CD4-positive, alpha-beta memory T cell (primary cell): ENCODE measurements at regions of chr14 and their contacts with region 1.

Region 1: GRCh38 chr14:105300792-105301533 is at the start of gene BRF1:
- DNase-seq: peak; percentile 97 to 99 (median 98)
- H3K4me3 ChIP-seq: peak within 1 kb of the TSS; percentile 65 to 80
- H3K4me3 Mint-ChIP-seq: peak within 1 kb of the TSS; percentile 88 to 95 (median 90)
- H3K27ac ChIP-seq: peak within 1 kb of the TSS; percentile 63
- H3K27ac Mint-ChIP-seq: peak within 1 kb of the TSS; percentile 80 to 98 (median 95)
- H3K4me1 ChIP-seq: peaks cover 23% of the 10 kb centered on the region
- H3K4me1 Mint-ChIP-seq: peaks cover 22 to 48% (median 30%) of the 10 kb centered on the region in 4 donors
- H3K27me3 ChIP-seq: no peaks in the 10 kb centered on the region
- H3K27me3 Mint-ChIP-seq: no peaks in the 10 kb centered on the region
- total RNA-seq, gene BRF1: 49.7 to 56.0 TPM

Region 2: GRCh38 chr14:105086833-105087307 is 214.1 kb before region 1 on chr14:
- CTCF ChIA-PET with region 1: no interaction called
- POLR2A ChIA-PET with region 1: no interaction called
- intact Hi-C with region 1: loop called (anchors 2 kb)
- DNase-seq: peak; percentile 81 to 87 (median 84)
- H3K4me3 ChIP-seq: peak overlapping the region; percentile 23 to 57
- H3K4me3 Mint-ChIP-seq: peak overlapping the region; percentile 71 to 83 (median 78)
- H3K27ac ChIP-seq: peak overlapping the region; percentile 26
- H3K27ac Mint-ChIP-seq: peak overlapping the region in 3 of 7 donors; percentile 15 to 91 (median 77)
- H3K4me1 ChIP-seq: peaks cover 23% of the 10 kb centered on the region
- H3K4me1 Mint-ChIP-seq: peaks cover 13 to 24% (median 16%) of the 10 kb centered on the region in 4 donors
- H3K27me3 ChIP-seq: no peaks in the 10 kb centered on the region
- H3K27me3 Mint-ChIP-seq: peaks cover 0 to 1% of the 10 kb centered on the region in 2 donors

Region 3: GRCh38 chr14:105248368-105248756 is 52.6 kb before region 1 on chr14 and contains the start of gene BTBD6:
- CTCF ChIA-PET with region 1: interaction called, 3 read pairs
- POLR2A ChIA-PET with region 1: interaction called, 31 read pairs
- intact Hi-C with region 1: loop called (anchors 1 kb)
- DNase-seq: peak; percentile 87 to 90 (median 90)
- H3K4me3 ChIP-seq: peak within 1 kb of the TSS; percentile 42 to 71
- H3K4me3 Mint-ChIP-seq: peak within 1 kb of the TSS; percentile 77 to 84 (median 80)
- H3K27ac ChIP-seq: peak within 1 kb of the TSS; percentile 63
- H3K27ac Mint-ChIP-seq: peak within 1 kb of the TSS; percentile 68 to 89 (median 87)
- H3K4me1 ChIP-seq: peaks cover 19% of the 10 kb centered on the region
- H3K4me1 Mint-ChIP-seq: peaks cover 14 to 48% (median 19%) of the 10 kb centered on the region in 4 donors
- H3K27me3 ChIP-seq: no peaks in the 10 kb centered on the region
- H3K27me3 Mint-ChIP-seq: no peaks in the 10 kb centered on the region
- total RNA-seq, gene BTBD6: 52.0 to 56.7 TPM

Region 4: GRCh38 chr14:105314287-105315200 is 13.6 kb after region 1 on chr14 and contains the start of gene PACS2:
- CTCF ChIA-PET with region 1: interaction called, 11 read pairs
- POLR2A ChIA-PET with region 1: interaction called, 136 read pairs
- intact Hi-C with region 1: loop called (anchors 1 kb)
- DNase-seq: peak; percentile 61 to 87 (median 83)
- H3K4me3 ChIP-seq: peak within 1 kb of the TSS; percentile 49 to 52
- H3K4me3 Mint-ChIP-seq: peak within 1 kb of the TSS; percentile 84 to 93 (median 86)
- H3K27ac ChIP-seq: peak within 1 kb of the TSS; percentile 62
- H3K27ac Mint-ChIP-seq: peak within 1 kb of the TSS; percentile 86 to 94 (median 90)
- H3K4me1 ChIP-seq: peaks cover 22% of the 10 kb centered on the region
- H3K4me1 Mint-ChIP-seq: peaks cover 7 to 31% (median 22%) of the 10 kb centered on the region in 4 donors
- H3K27me3 ChIP-seq: no peaks in the 10 kb centered on the region
- H3K27me3 Mint-ChIP-seq: no peaks in the 10 kb centered on the region
- total RNA-seq, gene PACS2: 70.9 to 76.6 TPM

Region 5: GRCh38 chr14:105389976-105390848 is 89.2 kb after region 1 on chr14:
- CTCF ChIA-PET with region 1: no interaction called
- POLR2A ChIA-PET with region 1: no interaction called
- intact Hi-C with region 1: no loop called
- DNase-seq: no peak
- H3K4me3 ChIP-seq: no peak overlapping the region
- H3K4me3 Mint-ChIP-seq: no peak overlapping the region
- H3K27ac ChIP-seq: no peak overlapping the region
- H3K27ac Mint-ChIP-seq: peak overlapping the region in 1 of 7 donors; percentile 15
- H3K4me1 ChIP-seq: no peaks in the 10 kb centered on the region
- H3K4me1 Mint-ChIP-seq: peaks cover 0 to 2% (median 0%) of the 10 kb centered on the region in 4 donors
- H3K27me3 ChIP-seq: no peaks in the 10 kb centered on the region
- H3K27me3 Mint-ChIP-seq: no peaks in the 10 kb centered on the region

Region 6: GRCh38 chr14:105480952-105481801 is 180.2 kb after region 1 on chr14:
- CTCF ChIA-PET with region 1: no interaction called
- POLR2A ChIA-PET with region 1: interaction called, 13 read pairs
- intact Hi-C with region 1: loop called (anchors 2 kb)
- DNase-seq: peak; percentile 89 to 95 (median 90)
- H3K4me3 ChIP-seq: peak overlapping the region; percentile 49 to 80
- H3K4me3 Mint-ChIP-seq: peak overlapping the region; percentile 83 to 92 (median 86)
- H3K27ac ChIP-seq: peak overlapping the region; percentile 97
- H3K27ac Mint-ChIP-seq: peak overlapping the region; percentile 96 to 100 (median 100)
- H3K4me1 ChIP-seq: peaks cover 82% of the 10 kb centered on the region
- H3K4me1 Mint-ChIP-seq: peaks cover 31 to 78% (median 57%) of the 10 kb centered on the region in 4 donors
- H3K27me3 ChIP-seq: no peaks in the 10 kb centered on the region
- H3K27me3 Mint-ChIP-seq: no peaks in the 10 kb centered on the region